Activated CD4-positive, alpha-beta T cell treated with anti-CD3 and anti-CD28 coated beads for 36 hours (primary cell): ENCODE measurements at regions of chr9 and their contacts with region 1.

Region 1: DNA sequence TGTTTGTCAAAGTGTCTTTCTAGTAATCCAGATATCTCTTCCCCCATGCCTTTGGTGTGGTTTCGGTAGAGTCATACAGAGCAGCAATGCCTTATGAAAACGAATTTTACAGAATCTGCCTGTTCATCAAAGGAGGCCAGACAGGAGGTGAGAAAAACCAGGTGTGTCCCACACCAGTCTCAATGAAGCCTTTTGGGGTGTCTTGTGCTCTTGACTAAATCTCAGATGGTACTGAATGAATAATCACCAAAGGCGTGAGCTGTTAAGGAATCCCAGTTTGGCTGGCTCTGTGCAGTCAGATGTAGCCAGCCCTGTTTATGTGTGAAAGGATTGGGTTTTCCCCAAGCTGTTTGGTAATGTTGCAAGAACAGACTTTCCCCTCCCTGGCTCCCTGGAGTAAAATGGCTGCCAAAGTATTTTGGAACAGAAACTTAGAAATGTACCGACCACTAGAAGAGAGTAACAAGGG is 70.8 kb upstream of the CDKN2B start:
- DNase-seq: peak; percentile 75
- ATAC-seq: peak; percentile 99
- H3K4me3 Mint-ChIP-seq: no peak overlapping the region
- H3K27ac Mint-ChIP-seq: no peak overlapping the region
- H3K4me1 Mint-ChIP-seq: peaks cover 26% of the 10 kb centered on the region
- H3K27me3 Mint-ChIP-seq: peaks cover 61% of the 10 kb centered on the region

Region 2: GRCh38 chr9:21761309-21761901 is 318.5 kb before region 1 on chr9:
- CTCF ChIA-PET with region 1: interaction called, 3 read pairs
- POLR2A ChIA-PET with region 1: no interaction called
- intact Hi-C with region 1: loop called in 1 of 2 experiments (anchors 1 kb)
- DNase-seq: peak; percentile 60
- ATAC-seq: peak; percentile 95
- H3K4me3 Mint-ChIP-seq: no peak overlapping the region
- H3K27ac Mint-ChIP-seq: no peak overlapping the region
- H3K4me1 Mint-ChIP-seq: peaks cover 12% of the 10 kb centered on the region
- H3K27me3 Mint-ChIP-seq: peaks cover 49% of the 10 kb centered on the region

Region 3: DNA sequence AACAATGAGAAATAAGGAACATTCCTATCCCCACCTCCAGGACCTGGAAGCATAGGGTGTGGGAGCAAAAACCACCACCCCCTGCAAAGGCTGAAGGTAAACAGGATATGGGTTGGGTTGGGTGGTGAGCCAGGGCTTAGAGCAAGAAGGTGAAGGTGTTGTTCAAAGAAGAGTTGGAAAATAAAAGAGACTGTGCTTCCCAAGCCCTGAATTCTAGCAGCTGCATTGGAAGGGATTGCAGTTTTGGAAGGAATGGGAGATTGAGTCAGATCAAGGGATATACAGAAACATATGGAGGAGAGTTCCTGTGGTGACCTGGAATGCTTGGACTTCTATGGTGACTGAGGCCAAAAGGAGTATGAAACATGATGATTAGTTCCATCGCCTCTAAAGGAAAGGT is 302.2 kb before region 1 on chr9:
- CTCF ChIA-PET with region 1: no interaction called
- POLR2A ChIA-PET with region 1: no interaction called
- intact Hi-C with region 1: no loop called
- DNase-seq: no peak
- ATAC-seq: no peak
- H3K4me3 Mint-ChIP-seq: no peak overlapping the region
- H3K27ac Mint-ChIP-seq: no peak overlapping the region
- H3K4me1 Mint-ChIP-seq: peaks cover 3% of the 10 kb centered on the region
- H3K27me3 Mint-ChIP-seq: no peaks in the 10 kb centered on the region

Region 4: DNA sequence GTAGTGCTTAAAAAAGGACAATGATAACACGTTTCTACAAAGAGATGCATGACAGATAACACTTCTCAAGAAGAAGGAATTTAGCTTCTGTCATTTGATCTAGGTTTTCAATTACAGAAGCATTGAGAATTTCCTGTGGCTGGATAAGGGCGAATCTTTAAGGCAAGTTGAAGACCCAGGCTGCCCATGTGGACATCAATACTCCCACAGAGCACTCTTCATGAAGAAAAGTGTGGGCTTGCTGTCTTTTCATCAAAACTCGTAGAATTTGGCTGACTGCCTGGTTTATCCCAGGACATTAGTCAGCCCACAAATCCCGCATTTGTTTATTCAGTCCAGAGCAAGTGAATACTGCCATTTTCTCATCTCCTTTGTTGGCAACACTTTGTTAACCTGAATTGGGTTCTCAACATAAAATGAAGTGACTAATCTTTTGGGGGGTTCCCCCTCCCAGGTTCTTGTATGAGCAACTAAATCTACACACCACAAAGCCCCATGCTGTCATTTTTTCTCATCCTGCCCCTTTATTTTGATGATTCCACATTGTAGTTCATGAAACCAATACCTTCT is 27.4 kb before region 1 on chr9:
- CTCF ChIA-PET with region 1: interaction called, 3 read pairs
- POLR2A ChIA-PET with region 1: no interaction called
- intact Hi-C with region 1: loop called (anchors 1 kb)
- DNase-seq: peak; percentile 57
- ATAC-seq: peak; percentile 96
- H3K4me3 Mint-ChIP-seq: no peak overlapping the region
- H3K27ac Mint-ChIP-seq: no peak overlapping the region
- H3K4me1 Mint-ChIP-seq: peaks cover 30% of the 10 kb centered on the region
- H3K27me3 Mint-ChIP-seq: peaks cover 13% of the 10 kb centered on the region

Region 5: GRCh38 chr9:22105005-22105722 is 25.3 kb after region 1 on chr9:
- CTCF ChIA-PET with region 1: interaction called, 5 read pairs
- POLR2A ChIA-PET with region 1: interaction called, 3 read pairs
- intact Hi-C with region 1: loop called (anchors 1 kb)
- DNase-seq: peak; percentile 31
- ATAC-seq: peak; percentile 96
- H3K4me3 Mint-ChIP-seq: no peak overlapping the region
- H3K27ac Mint-ChIP-seq: no peak overlapping the region
- H3K4me1 Mint-ChIP-seq: peaks cover 12% of the 10 kb centered on the region
- H3K27me3 Mint-ChIP-seq: peaks cover 14% of the 10 kb centered on the region

Region 6: GRCh38 chr9:22208846-22209585 is 129.1 kb after region 1 on chr9:
- CTCF ChIA-PET with region 1: no interaction called
- POLR2A ChIA-PET with region 1: no interaction called
- intact Hi-C with region 1: loop called in 1 of 2 experiments (anchors 1 kb)
- DNase-seq: peak; percentile 25
- ATAC-seq: peak; percentile 92
- H3K4me3 Mint-ChIP-seq: no peak overlapping the region
- H3K27ac Mint-ChIP-seq: no peak overlapping the region
- H3K4me1 Mint-ChIP-seq: peaks cover 28% of the 10 kb centered on the region
- H3K27me3 Mint-ChIP-seq: peaks cover 5% of the 10 kb centered on the region

Region 7: DNA sequence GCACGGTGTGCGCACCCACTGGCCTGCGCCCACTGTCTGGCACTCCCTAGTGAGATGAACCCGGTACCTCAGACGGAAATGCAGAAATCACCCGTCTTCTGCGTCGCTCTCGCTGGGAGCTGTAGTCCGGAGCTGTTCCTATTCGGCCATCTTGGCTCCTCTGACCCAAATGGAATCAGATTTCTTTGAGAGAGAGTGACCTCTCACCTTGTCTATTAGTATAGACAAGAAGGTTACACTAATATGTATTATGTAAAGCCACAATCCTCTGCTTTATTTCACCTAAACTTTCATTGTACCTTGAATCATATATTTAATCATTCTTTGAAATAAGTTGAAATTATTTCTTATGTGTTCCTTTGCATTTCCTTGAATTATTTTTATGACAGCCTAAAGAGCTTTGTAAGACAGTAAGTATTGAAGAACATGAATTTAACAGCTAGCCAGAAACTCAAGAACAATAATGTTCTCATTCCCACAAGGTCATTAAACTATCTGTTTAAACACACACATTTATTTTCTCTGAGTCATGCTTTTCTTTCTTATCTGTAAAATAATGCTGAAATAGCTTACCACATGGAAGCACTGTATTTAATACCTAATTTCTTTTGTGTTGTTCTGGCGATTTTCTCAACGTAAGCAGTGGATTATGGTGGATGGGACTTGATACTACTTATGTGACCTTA is 274.9 kb after region 1 on chr9:
- CTCF ChIA-PET with region 1: no interaction called
- POLR2A ChIA-PET with region 1: no interaction called
- intact Hi-C with region 1: no loop called
- DNase-seq: no peak
- ATAC-seq: no peak
- H3K4me3 Mint-ChIP-seq: no peak overlapping the region
- H3K27ac Mint-ChIP-seq: no peak overlapping the region
- H3K4me1 Mint-ChIP-seq: no peaks in the 10 kb centered on the region
- H3K27me3 Mint-ChIP-seq: no peaks in the 10 kb centered on the region